Sigmoid colon (tissue), 7 donors: ENCODE measurements at regions of chr12 and their contacts with region 1.

Region 1: DNA sequence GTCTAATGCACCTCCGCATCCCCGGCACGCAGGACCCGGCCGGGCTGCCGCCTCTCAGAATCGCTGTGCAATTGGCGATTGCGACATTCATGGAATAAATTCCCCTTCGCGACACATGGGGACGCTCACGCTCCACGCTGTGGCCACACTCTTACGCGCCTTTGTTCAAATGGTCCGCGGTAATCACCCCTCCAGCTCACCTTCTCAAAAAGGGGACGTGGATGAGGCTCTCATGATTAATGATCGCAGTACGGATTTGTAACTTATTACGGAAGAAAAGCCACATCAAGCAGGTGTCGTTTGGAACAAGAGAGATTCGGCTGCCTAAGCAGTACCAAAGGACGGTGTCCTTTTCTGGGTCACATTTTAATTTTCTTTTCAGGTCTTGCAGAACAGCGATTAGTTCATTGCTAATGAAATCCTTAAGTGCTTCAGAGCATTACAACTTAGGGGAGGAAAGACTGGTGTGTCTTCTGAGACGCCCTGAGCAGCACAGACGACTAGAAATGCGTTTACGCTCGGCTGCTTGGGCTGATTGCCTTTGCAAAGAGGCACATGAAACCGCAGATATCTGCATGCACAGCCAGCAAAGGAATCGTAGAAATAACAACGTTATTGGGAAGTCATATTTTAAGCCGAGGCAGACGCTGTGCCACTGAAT is 37.3 kb upstream of the ADGRD1 start:
- DNase-seq: peak; percentile 85
- H3K4me3 ChIP-seq: peak overlapping the region in 2 of 4 donors; percentile 25 to 27
- H3K27ac ChIP-seq: peak overlapping the region in 1 of 4 donors; percentile 26
- H3K4me1 ChIP-seq: peaks cover 0 to 16% (median 8%) of the 10 kb centered on the region in 4 donors
- H3K27me3 ChIP-seq: peaks cover 0 to 16% (median 0%) of the 10 kb centered on the region in 3 donors
- CTCF ChIP-seq: peak; percentile 91 to 98 (median 98)
- EP300 ChIP-seq: no peak
- POLR2A ChIP-seq: no peak

Region 2: GRCh38 chr12:130970165-130970907 is 54.0 kb after region 1 on chr12:
- intact Hi-C with region 1: no loop called
- DNase-seq: peak; percentile 39
- H3K4me3 ChIP-seq: no peak overlapping the region
- H3K27ac ChIP-seq: no peak overlapping the region
- H3K4me1 ChIP-seq: no peaks in the 10 kb centered on the region
- H3K27me3 ChIP-seq: no peaks in the 10 kb centered on the region
- CTCF ChIP-seq: no peak
- EP300 ChIP-seq: no peak
- POLR2A ChIP-seq: no peak

Region 3: GRCh38 chr12:131007031-131007739 is 90.8 kb after region 1 on chr12:
- intact Hi-C with region 1: loop called (anchors 5 kb)
- DNase-seq: peak; percentile 92
- H3K4me3 ChIP-seq: no peak overlapping the region
- H3K27ac ChIP-seq: peak overlapping the region; percentile 31 to 82 (median 78)
- H3K4me1 ChIP-seq: peaks cover 0 to 76% (median 55%) of the 10 kb centered on the region in 4 donors
- H3K27me3 ChIP-seq: no peaks in the 10 kb centered on the region
- CTCF ChIP-seq: no peak
- EP300 ChIP-seq: peak; percentile 36 to 75 (median 47)
- POLR2A ChIP-seq: no peak

Region 4: DNA sequence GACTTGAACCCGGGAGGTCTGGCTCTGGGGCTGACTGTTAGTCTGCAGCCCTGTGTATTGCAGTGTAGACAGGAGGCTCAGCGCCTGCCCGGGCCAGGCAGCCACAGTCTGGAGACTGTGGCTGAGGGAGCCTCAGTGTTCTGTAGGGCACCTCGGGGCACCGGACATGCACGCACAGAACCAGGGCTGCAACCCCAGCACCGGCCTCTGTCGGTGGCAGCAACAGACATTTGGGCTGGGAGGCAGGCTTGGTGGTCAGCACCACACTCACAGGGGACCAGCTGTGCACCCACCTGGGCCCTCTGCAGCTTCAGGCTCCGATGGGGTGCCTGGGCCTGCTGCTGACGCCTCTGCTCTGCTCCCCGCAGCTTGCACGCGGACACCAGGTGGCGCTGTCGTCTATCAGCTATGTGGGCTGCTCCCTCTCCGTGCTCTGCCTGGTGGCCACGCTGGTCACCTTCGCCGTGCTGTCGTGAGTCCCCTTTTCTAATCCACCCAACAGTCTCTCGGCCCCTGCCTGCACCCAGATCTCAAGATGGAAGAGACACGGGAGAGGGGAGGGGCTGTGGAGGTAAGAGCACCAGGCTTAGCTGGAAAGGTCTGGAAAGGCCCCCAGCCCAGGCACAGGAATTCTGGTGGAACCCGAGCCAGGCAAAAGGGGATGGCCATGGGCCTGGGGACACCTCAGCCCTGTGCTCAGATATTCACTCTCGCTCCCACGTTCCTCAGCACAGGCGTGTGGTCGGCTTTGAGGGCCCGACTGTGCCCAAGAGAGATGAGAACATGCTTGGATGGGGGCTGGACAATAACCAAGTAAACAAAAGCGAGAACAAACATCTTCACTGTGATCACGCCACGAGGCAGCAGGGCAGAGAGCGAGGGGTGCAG is 188.3 kb after region 1 on chr12:
- intact Hi-C with region 1: loop called (anchors 10 kb)
- DNase-seq: peak; percentile 91
- H3K4me3 ChIP-seq: no peak overlapping the region
- H3K27ac ChIP-seq: no peak overlapping the region
- H3K4me1 ChIP-seq: peaks cover 0 to 12% (median 7%) of the 10 kb centered on the region in 4 donors
- H3K27me3 ChIP-seq: no peaks in the 10 kb centered on the region
- CTCF ChIP-seq: peak; percentile 81 to 94 (median 90)
- EP300 ChIP-seq: no peak
- POLR2A ChIP-seq: no peak

Region 5: GRCh38 chr12:131132118-131132892 is 215.9 kb after region 1 on chr12:
- intact Hi-C with region 1: loop called (anchors 1 kb)
- DNase-seq: peak; percentile 85
- H3K4me3 ChIP-seq: no peak overlapping the region
- H3K27ac ChIP-seq: peak overlapping the region in 3 of 4 donors; percentile 3 to 48 (median 39)
- H3K4me1 ChIP-seq: peaks cover 0 to 30% (median 19%) of the 10 kb centered on the region in 4 donors
- H3K27me3 ChIP-seq: no peaks in the 10 kb centered on the region
- CTCF ChIP-seq: peak; percentile 65 to 87 (median 82)
- EP300 ChIP-seq: no peak
- POLR2A ChIP-seq: no peak

Region 6: GRCh38 chr12:131701705-131702572 is 785.6 kb after region 1 on chr12:
- intact Hi-C with region 1: loop called (anchors 10 kb)
- DNase-seq: no peak
- H3K4me3 ChIP-seq: no peak overlapping the region
- H3K27ac ChIP-seq: no peak overlapping the region
- H3K4me1 ChIP-seq: no peaks in the 10 kb centered on the region
- H3K27me3 ChIP-seq: no peaks in the 10 kb centered on the region
- CTCF ChIP-seq: no peak
- EP300 ChIP-seq: no peak
- POLR2A ChIP-seq: no peak

Region 7: DNA sequence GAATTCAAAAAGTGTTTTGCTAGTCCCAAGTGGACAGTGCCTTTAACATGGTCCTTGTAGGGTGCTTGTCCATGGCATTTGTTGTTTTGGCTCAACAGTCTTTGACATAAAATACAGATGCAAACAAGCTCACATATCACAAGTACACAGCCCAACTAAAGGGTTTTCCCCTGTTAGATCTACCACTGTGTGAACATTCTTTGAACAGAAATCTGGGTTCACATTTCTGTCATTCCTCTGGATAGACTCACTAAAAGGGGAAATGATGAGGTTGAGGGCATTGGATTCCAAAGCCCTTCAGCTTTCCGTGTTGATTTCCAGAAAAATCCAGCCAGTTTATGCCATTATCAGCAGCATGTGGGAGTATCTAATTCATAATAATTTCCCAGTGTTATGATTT is 1087.5 kb after region 1 on chr12:
- intact Hi-C with region 1: loop called (anchors 5 kb)
- DNase-seq: no peak
- H3K4me3 ChIP-seq: no peak overlapping the region
- H3K27ac ChIP-seq: no peak overlapping the region
- H3K4me1 ChIP-seq: no peaks in the 10 kb centered on the region
- H3K27me3 ChIP-seq: no peaks in the 10 kb centered on the region
- CTCF ChIP-seq: no peak
- EP300 ChIP-seq: no peak
- POLR2A ChIP-seq: no peak